ENCODE measurements at regions of chr10 and their contacts with region 1.

Region 1: DNA sequence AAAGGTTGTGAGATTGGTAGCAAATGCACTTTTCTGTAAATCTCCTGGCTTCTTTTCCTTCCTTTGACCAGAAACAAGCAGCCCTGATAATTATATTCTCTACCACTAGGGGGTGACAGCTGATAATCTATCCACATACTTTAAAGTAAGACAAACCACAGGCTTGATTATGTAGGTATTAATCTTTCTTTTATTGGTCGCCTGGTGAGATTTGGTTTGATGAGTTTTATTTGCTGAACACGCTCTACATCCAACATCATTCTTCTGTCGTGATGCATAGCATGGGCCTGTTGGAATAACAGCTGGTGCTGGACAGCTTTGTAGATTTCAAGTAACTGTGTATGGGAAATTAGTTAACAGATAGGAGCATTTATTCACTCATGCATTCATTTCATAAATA is 63.5 kb downstream of the ZNF365 start:
- DNase-seq: no peak
- ATAC-seq: peak; percentile 63
- H3K4me3 Mint-ChIP-seq: no peak overlapping the region
- H3K27ac Mint-ChIP-seq: no peak overlapping the region
- H3K4me1 Mint-ChIP-seq: peaks cover 19% of the 10 kb centered on the region
- H3K27me3 Mint-ChIP-seq: peaks cover 6% of the 10 kb centered on the region
- CTCF ChIP-seq: peak; percentile 78

Region 2: GRCh38 chr10:62268399-62269114 is 169.1 kb before region 1 on chr10 and contains the start of gene RTKN2:
- CTCF ChIA-PET with region 1: interaction called, 17 read pairs
- POLR2A ChIA-PET with region 1: no interaction called
- intact Hi-C with region 1: loop called (anchors 10 kb)
- DNase-seq: peak; percentile 72
- ATAC-seq: peak; percentile 91
- H3K4me3 Mint-ChIP-seq: peak within 1 kb of the TSS; percentile 71
- H3K27ac Mint-ChIP-seq: no peak within 1 kb of the TSS
- H3K4me1 Mint-ChIP-seq: peaks cover 8% of the 10 kb centered on the region
- H3K27me3 Mint-ChIP-seq: peaks cover 30% of the 10 kb centered on the region
- CTCF ChIP-seq: no peak
- total RNA-seq, gene RTKN2: 1.1 to 1.4 TPM

Region 3: DNA sequence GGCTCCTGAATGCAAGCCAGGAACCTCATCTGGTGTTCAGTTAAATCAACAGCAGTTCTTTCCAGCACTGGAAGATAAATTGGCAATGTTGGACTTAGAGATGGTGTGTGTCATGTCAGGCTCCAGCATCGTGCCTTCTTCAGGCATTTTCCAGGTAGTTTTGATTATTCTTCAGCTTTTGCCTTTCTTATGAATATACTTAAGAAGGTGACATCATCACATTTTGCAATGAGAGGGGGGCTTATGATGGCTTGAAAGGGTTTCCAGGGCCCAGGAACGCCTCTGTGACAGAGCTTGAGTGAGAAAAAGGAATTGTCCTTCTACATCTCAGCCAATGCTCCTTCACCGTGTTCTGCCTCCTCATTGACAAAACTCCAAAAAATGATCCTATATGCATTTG is 32.6 kb before region 1 on chr10:
- CTCF ChIA-PET with region 1: no interaction called
- POLR2A ChIA-PET with region 1: no interaction called
- intact Hi-C with region 1: no loop called
- DNase-seq: no peak
- ATAC-seq: no peak
- H3K4me3 Mint-ChIP-seq: no peak overlapping the region
- H3K27ac Mint-ChIP-seq: no peak overlapping the region
- H3K4me1 Mint-ChIP-seq: no peaks in the 10 kb centered on the region
- H3K27me3 Mint-ChIP-seq: peaks cover 13% of the 10 kb centered on the region
- CTCF ChIP-seq: no peak

Region 4: GRCh38 chr10:62422068-62422590 is 15.6 kb before region 1 on chr10:
- CTCF ChIA-PET with region 1: interaction called, 28 read pairs
- POLR2A ChIA-PET with region 1: no interaction called
- intact Hi-C with region 1: no loop called
- DNase-seq: no peak
- ATAC-seq: no peak
- H3K4me3 Mint-ChIP-seq: no peak overlapping the region
- H3K27ac Mint-ChIP-seq: no peak overlapping the region
- H3K4me1 Mint-ChIP-seq: peaks cover 20% of the 10 kb centered on the region
- H3K27me3 Mint-ChIP-seq: peaks cover 10% of the 10 kb centered on the region
- CTCF ChIP-seq: no peak

Region 5: DNA sequence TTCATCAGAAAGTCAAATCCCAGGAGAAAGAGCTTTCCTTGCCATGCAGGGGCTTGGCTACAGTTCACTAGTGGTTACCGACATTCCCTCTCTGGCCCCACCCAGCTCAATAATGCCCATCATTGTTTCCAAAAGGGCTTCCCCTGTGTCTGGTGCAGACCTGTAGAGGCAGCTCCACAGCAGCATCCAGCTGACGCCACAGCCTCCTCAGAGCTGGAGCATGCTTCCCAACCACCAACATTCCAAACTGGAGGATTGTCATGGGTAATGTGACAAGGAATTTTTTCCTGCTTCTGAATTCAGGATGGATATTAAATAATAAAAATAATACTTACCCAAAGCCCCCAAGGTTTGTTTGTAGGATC is 13.9 kb after region 1 on chr10:
- CTCF ChIA-PET with region 1: interaction called, 45 read pairs
- POLR2A ChIA-PET with region 1: no interaction called
- intact Hi-C with region 1: no loop called
- DNase-seq: no peak
- ATAC-seq: no peak
- H3K4me3 Mint-ChIP-seq: no peak overlapping the region
- H3K27ac Mint-ChIP-seq: no peak overlapping the region
- H3K4me1 Mint-ChIP-seq: peaks cover under 1% of the 10 kb centered on the region
- H3K27me3 Mint-ChIP-seq: peaks cover 15% of the 10 kb centered on the region
- CTCF ChIP-seq: no peak

Region 6: DNA sequence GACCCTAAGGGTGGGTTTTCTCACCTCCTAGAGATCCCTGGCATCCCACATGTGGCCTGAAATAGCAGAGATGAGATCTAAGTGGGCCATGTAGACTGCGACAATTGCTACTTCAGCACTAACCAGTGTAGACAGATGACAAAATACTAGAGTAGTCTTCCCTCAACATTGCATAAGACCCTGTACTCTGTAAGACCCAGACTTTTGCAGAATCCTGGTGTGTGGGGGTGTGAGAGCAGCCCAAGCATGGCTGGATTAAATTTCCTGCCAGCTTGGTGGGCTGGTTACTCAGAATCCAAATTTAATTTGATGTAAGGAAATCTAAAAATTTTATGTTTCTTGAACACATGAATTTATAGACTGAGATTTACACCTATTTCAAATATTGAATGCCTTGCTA is 24.8 kb after region 1 on chr10:
- CTCF ChIA-PET with region 1: interaction called, 12 read pairs
- POLR2A ChIA-PET with region 1: no interaction called
- intact Hi-C with region 1: no loop called
- DNase-seq: no peak
- ATAC-seq: no peak
- H3K4me3 Mint-ChIP-seq: no peak overlapping the region
- H3K27ac Mint-ChIP-seq: no peak overlapping the region
- H3K4me1 Mint-ChIP-seq: peaks cover 8% of the 10 kb centered on the region
- H3K27me3 Mint-ChIP-seq: peaks cover 1% of the 10 kb centered on the region
- CTCF ChIP-seq: no peak

Region 7: GRCh38 chr10:62502995-62503613 is 65.4 kb after region 1 on chr10:
- CTCF ChIA-PET with region 1: no interaction called
- POLR2A ChIA-PET with region 1: no interaction called
- intact Hi-C with region 1: no loop called
- DNase-seq: no peak
- ATAC-seq: no peak
- H3K4me3 Mint-ChIP-seq: no peak overlapping the region
- H3K27ac Mint-ChIP-seq: no peak overlapping the region
- H3K4me1 Mint-ChIP-seq: no peaks in the 10 kb centered on the region
- H3K27me3 Mint-ChIP-seq: no peaks in the 10 kb centered on the region
- CTCF ChIP-seq: no peak

Region 8: DNA sequence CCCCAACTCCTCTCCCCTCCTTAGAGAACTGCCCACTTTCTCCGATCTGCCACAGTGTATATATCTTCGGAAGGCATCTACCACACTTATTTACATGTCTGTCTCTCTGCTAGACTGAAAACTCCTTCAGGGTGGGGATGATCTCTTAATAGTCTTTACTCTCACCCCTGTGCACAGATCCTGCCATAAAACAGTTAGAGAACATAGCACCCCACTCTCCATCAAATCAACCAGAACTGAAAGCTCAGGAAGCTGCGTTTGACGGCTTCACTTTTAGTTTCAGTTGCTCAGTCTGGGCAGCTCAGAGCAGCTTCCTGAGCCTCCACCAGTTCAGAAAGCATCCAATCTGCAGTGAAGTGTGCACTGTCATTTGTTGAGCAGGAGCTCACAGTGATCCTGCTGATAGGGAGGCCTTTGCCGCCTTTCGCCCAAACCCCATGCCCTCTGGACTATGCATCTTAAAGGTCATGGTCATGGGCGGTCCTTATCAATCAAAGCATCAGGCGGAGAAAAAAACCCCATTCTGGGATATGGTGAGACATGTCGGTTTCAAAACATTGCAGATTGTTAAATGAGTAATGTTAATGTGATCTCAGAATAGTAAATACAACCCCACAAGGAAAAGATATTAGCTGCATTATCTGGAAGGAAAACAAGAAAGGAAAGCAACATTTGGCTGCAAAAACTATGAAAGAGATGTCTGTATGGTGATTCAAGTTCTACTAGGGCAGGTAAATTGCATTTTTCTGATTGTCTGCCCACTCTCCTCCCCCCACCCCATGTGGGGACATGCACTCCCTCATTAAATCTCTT is 199.8 kb after region 1 on chr10:
- CTCF ChIA-PET with region 1: no interaction called
- POLR2A ChIA-PET with region 1: no interaction called
- intact Hi-C with region 1: no loop called
- DNase-seq: peak; percentile 90
- ATAC-seq: peak; percentile 93
- H3K4me3 Mint-ChIP-seq: no peak overlapping the region
- H3K27ac Mint-ChIP-seq: no peak overlapping the region
- H3K4me1 Mint-ChIP-seq: peaks cover 25% of the 10 kb centered on the region
- H3K27me3 Mint-ChIP-seq: no peaks in the 10 kb centered on the region
- CTCF ChIP-seq: no peak

Region 9: GRCh38 chr10:63083904-63084689 is 646.4 kb after region 1 on chr10:
- CTCF ChIA-PET with region 1: interaction called, 17 read pairs
- POLR2A ChIA-PET with region 1: no interaction called
- intact Hi-C with region 1: loop called (anchors 10 kb)
- DNase-seq: peak; percentile 61
- ATAC-seq: peak; percentile 75
- H3K4me3 Mint-ChIP-seq: no peak overlapping the region
- H3K27ac Mint-ChIP-seq: no peak overlapping the region
- H3K4me1 Mint-ChIP-seq: no peaks in the 10 kb centered on the region
- H3K27me3 Mint-ChIP-seq: peaks cover 16% of the 10 kb centered on the region
- CTCF ChIP-seq: peak; percentile 75